Spleen (tissue), 13 donors: ENCODE measurements at regions of chr20 and their contacts with region 1.

Region 1: GRCh38 chr20:38645980-38646858 is 44.6 kb downstream of the ARHGAP40 start:
- DNase-seq: peak; percentile 96
- H3K4me3 ChIP-seq: peak overlapping the region in 6 of 8 donors; percentile 9 to 62 (median 22)
- H3K27ac ChIP-seq: no peak overlapping the region
- H3K4me1 ChIP-seq: peaks cover 3 to 14% (median 11%) of the 10 kb centered on the region in 6 donors
- H3K27me3 ChIP-seq: peaks cover 0 to 84% (median 8%) of the 10 kb centered on the region in 7 donors
- CTCF ChIP-seq: peak; percentile 93 to 99 (median 97)
- POLR2A ChIP-seq: no peak

Region 2: GRCh38 chr20:38751360-38751976 is 105.2 kb after region 1 on chr20:
- intact Hi-C with region 1: loop called (anchors 5 kb)
- DNase-seq: no peak
- H3K4me3 ChIP-seq: no peak overlapping the region
- H3K27ac ChIP-seq: no peak overlapping the region
- H3K4me1 ChIP-seq: peaks cover 6 to 42% (median 29%) of the 10 kb centered on the region in 6 donors
- H3K27me3 ChIP-seq: no peaks in the 10 kb centered on the region
- CTCF ChIP-seq: peak; percentile 40 to 72 (median 55)
- POLR2A ChIP-seq: no peak

Region 3: GRCh38 chr20:38893565-38894090 is 247.4 kb after region 1 on chr20:
- intact Hi-C with region 1: loop called (anchors 5 kb)
- DNase-seq: peak; percentile 95
- H3K4me3 ChIP-seq: peak overlapping the region in 1 of 8 donors; percentile 31
- H3K27ac ChIP-seq: peak overlapping the region; percentile 59 to 88 (median 74)
- H3K4me1 ChIP-seq: peaks cover 10 to 56% (median 31%) of the 10 kb centered on the region in 6 donors
- H3K27me3 ChIP-seq: no peaks in the 10 kb centered on the region
- CTCF ChIP-seq: peak; percentile 63 to 96 (median 88)
- POLR2A ChIP-seq: no peak

Region 4: GRCh38 chr20:39049684-39050554 is 403.7 kb after region 1 on chr20:
- intact Hi-C with region 1: loop called (anchors 5 kb)
- DNase-seq: peak; percentile 95
- H3K4me3 ChIP-seq: peak overlapping the region; percentile 53 to 82 (median 70)
- H3K27ac ChIP-seq: peak overlapping the region in 7 of 8 donors; percentile 37 to 81 (median 64)
- H3K4me1 ChIP-seq: peaks cover 3 to 19% (median 16%) of the 10 kb centered on the region in 6 donors
- H3K27me3 ChIP-seq: peaks cover 0 to 16% (median 0%) of the 10 kb centered on the region in 7 donors
- CTCF ChIP-seq: peak; percentile 92 to 99 (median 97)
- POLR2A ChIP-seq: no peak

Region 5: DNA sequence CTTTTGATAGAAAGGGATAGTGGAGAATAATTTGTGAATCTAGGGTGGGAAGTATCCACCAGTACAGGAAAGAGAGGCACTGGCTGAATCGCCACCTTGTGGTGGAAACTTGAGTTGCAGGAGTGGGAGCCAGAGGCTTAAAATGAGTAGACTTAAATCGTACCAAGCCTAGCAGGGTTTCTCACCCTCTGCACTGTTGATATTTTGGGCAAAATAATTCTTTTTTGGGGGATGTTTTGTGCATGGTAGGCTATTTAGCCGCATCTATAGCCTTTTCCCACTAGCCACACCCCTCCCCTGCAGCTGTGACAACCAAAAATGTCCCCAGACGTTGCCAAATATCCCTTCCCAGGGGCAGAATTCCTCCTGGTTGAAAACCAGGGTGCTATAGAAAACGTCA is 435.0 kb after region 1 on chr20:
- intact Hi-C with region 1: loop called (anchors 2 kb)
- DNase-seq: peak; percentile 84
- H3K4me3 ChIP-seq: no peak overlapping the region
- H3K27ac ChIP-seq: no peak overlapping the region
- H3K4me1 ChIP-seq: no peaks in the 10 kb centered on the region
- H3K27me3 ChIP-seq: peaks cover 0 to 65% (median 3%) of the 10 kb centered on the region in 7 donors
- CTCF ChIP-seq: peak; percentile 80 to 96 (median 92)
- POLR2A ChIP-seq: no peak